ENCODE measurements at regions of chr1 and their contacts with region 1.

Region 1: DNA sequence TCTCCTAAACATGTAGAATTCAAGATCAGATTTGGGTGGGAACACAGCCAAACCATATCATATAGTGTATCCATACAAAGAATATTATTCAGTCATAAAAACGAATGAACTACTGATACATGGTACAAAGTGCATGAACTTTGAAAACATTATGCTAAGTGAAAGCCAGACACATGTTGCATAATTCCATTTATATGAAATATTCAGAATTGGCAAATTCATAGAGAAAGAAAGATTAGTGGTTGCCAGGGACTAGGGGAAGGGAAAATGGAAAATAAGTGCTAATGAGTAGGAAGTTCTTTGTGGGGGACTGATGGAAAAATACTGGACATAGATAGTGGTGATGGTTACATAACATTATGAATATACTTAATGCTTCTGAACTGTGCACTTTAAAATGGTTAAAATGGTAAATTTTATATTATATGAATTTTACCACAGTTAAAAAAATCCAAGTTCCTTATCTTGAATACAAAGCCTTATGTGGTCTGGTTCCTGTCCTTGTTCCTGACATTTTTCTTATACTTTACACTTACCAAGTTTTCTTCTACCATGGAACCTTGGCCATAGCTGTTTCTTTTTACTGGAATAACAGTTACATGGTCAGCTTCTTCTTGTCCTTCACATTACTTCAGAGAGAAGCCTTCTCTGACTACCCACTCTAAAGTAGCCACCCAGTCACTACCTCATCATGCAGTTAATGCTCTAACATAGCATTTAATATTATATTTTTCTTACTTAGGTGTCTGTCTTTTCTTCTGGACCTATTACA is 64.0 kb downstream of the CCDC18 start:
- DNase-seq: no peak
- H3K4me3 Mint-ChIP-seq: no peak overlapping the region
- H3K27ac Mint-ChIP-seq: no peak overlapping the region
- H3K4me1 Mint-ChIP-seq: no peaks in the 10 kb centered on the region
- H3K27me3 Mint-ChIP-seq: no peaks in the 10 kb centered on the region
- CTCF ChIP-seq: no peak

Region 2: DNA sequence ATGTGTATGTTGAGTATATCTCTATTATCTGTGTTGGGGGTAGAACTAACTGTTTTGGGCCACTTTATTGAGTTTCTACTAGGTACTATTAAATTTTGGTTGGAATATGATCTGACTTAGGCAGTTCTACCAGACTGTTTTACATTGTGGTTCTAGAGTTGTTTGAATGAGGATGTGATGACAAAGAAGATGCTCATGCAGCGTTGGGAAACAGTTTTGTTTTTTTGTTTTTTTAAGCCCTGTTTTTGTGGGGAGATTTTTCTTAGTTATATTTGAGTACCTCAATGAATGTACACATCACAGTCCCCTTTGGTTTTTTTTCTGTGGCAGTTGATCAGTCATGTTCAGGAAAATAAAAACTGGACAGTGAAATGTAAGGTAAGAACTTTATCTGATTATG is 104.4 kb before region 1 on chr1:
- CTCF ChIA-PET with region 1: no interaction called
- intact Hi-C with region 1: no loop called
- DNase-seq: no peak
- H3K4me3 Mint-ChIP-seq: no peak overlapping the region
- H3K27ac Mint-ChIP-seq: no peak overlapping the region
- H3K4me1 Mint-ChIP-seq: no peaks in the 10 kb centered on the region
- H3K27me3 Mint-ChIP-seq: no peaks in the 10 kb centered on the region
- CTCF ChIP-seq: no peak

Region 3: GRCh38 chr1:93255222-93256079 is 11.0 kb after region 1 on chr1:
- CTCF ChIA-PET with region 1: no interaction called
- intact Hi-C with region 1: loop called (anchors 1 kb)
- DNase-seq: no peak
- H3K4me3 Mint-ChIP-seq: no peak overlapping the region
- H3K27ac Mint-ChIP-seq: no peak overlapping the region
- H3K4me1 Mint-ChIP-seq: peaks cover 8% of the 10 kb centered on the region
- H3K27me3 Mint-ChIP-seq: no peaks in the 10 kb centered on the region
- CTCF ChIP-seq: no peak